ENCODE measurements at regions of chr19 and their contacts with region 1.

Region 1: GRCh38 chr19:40633207-40633606 is 32.0 kb downstream of the LTBP4 start:
- DNase-seq: no peak
- ATAC-seq: 0 out of 6 replicates have a peak, but pooled peaks of 1 of the 2 experiments have one; percentile 21
- H3K4me3 ChIP-seq: no peak overlapping the region
- H3K27ac ChIP-seq: no peak overlapping the region
- H3K4me1 ChIP-seq: peaks cover 7% of the 10 kb centered on the region
- CTCF ChIP-seq: no peak
- EP300 ChIP-seq: no peak
- POLR2A ChIP-seq: no peak
- RAD21 ChIP-seq: no peak

Region 2: DNA sequence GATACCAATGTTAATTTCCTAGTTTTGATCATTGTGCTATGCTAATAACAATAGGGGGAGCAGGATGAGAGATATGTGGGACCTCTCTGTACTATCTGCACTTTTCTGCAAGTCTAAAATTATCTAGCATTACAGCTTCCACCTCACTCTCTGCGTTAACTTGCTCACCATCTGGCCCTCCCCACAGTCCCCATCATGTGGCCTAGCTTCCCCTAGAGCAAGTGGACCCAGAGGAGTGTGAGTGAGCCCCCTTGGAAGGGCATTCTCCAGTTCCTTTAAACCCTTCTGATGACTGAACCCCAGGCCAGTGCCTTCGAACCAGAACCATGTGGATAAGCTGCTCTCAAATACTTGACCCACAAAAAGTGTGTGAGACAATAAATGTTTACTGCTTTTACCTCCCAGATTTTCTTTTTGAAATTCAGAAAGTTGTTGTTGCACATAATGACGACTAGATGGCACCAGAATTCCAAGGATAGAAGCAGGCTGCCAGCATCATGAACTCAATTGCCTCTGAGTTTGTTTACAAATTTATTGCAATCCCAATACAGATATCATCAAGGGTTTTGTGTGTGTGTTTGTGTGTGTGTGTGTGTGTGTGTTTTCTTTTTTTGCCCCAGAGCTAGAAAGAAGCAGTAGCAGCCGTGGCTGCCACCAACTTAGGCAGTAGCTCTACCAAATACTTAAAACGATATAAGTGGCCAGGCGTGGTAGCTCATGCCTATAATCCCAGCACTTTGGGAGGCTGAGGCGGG is 493.5 kb before region 1 on chr19:
- CTCF ChIA-PET with region 1: interaction called, 25 read pairs
- POLR2A ChIA-PET with region 1: no interaction called
- DNase-seq: peak; percentile 77 to 79
- ATAC-seq: peak; percentile 59 to 71
- H3K4me3 ChIP-seq: no peak overlapping the region
- H3K27ac ChIP-seq: no peak overlapping the region
- H3K4me1 ChIP-seq: no peaks in the 10 kb centered on the region
- CTCF ChIP-seq: peak; percentile 99
- EP300 ChIP-seq: no peak
- POLR2A ChIP-seq: no peak
- RAD21 ChIP-seq: peak; percentile 100

Region 3: DNA sequence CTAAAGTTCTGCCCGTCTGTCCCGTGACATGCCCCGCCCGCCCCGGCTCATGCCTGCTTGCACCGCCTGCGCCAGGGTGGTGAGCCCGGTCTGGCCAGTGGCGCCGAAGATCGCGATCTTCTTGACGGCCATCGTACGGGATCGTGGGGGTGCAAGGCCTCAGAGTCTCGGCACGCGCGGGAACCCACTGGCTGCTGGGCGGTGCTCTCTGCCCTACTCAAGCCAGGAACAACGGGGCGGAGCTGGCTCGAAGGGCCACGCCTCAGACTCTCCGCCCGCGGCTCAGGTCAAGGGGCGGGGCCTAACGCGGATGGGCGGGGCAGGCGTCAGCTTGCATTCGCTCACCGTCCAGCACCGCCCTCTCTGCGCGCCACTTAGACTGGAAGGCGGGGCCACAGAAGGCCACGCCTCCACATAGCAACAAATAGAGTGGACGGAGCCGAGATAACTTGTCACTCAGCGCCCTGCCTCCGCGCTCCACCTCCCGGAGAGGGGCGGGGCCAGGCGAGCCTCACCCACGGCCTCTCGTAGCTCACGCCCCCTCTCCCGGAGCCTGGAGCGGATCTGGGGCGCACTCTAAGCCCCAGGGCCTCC is 167.6 kb before region 1 on chr19 and contains the start of gene BLVRB:
- CTCF ChIA-PET with region 1: interaction called, 51 read pairs
- POLR2A ChIA-PET with region 1: interaction called, 5 read pairs
- DNase-seq: peak; percentile 98 to 100
- ATAC-seq: peak; percentile 73 to 88
- H3K4me3 ChIP-seq: peak within 1 kb of the TSS; percentile 62
- H3K27ac ChIP-seq: peak within 1 kb of the TSS; percentile 86 to 89
- H3K4me1 ChIP-seq: peaks cover 38% of the 10 kb centered on the region
- CTCF ChIP-seq: no peak
- EP300 ChIP-seq: no peak
- POLR2A ChIP-seq: peak; percentile 95
- RAD21 ChIP-seq: no peak
- polyA plus RNA-seq, gene BLVRB: 202 and 241 TPM in 2 replicates

Region 4: DNA sequence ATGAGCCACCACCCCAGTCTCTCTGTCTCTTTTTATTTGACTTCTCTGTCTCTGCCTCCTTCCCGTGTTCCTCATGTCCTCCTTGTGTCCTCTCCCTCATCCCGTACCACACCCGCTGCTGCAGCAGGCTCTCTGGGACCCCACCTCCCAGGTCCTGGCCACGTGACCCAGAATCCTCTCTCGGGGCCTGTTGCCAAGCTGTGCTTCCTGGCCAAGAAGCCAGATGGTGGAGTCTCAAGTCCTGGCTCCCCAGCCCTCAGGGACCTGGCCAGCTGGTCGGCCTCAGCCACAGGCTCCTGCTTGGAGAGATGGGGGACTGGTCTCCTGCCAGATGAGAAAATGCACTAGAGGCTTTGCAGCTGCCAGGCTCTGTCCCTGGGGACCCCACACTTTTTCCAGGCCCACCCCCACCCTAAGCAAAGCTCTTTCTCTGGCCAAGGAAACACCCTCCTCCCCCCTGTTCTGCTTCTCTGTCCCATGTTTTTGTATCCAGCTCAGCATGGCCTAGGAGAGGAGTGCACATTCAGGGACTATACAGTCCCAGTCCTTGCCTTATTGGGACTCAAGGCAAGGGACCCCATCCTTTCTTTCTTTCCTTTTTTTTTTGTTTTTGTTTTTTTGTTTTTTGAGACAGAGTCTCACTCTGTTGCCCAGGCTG is 90.9 kb before region 1 on chr19:
- CTCF ChIA-PET with region 1: interaction called, 109 read pairs
- POLR2A ChIA-PET with region 1: no interaction called
- DNase-seq: no peak
- ATAC-seq: no peak
- H3K4me3 ChIP-seq: no peak overlapping the region
- H3K27ac ChIP-seq: no peak overlapping the region
- H3K4me1 ChIP-seq: no peaks in the 10 kb centered on the region
- CTCF ChIP-seq: no peak
- EP300 ChIP-seq: no peak
- POLR2A ChIP-seq: no peak
- RAD21 ChIP-seq: no peak

Region 5: GRCh38 chr19:40592170-40592569 is 41.0 kb before region 1 on chr19:
- CTCF ChIA-PET with region 1: interaction called, 35 read pairs
- POLR2A ChIA-PET with region 1: no interaction called
- DNase-seq: peak; percentile 81 to 92
- ATAC-seq: peak in 1 of 2 experiments; percentile 58; a peak in 3 of 6 replicates
- H3K4me3 ChIP-seq: no peak overlapping the region
- H3K27ac ChIP-seq: no peak overlapping the region
- H3K4me1 ChIP-seq: peaks cover 36% of the 10 kb centered on the region
- CTCF ChIP-seq: no peak
- EP300 ChIP-seq: no peak
- POLR2A ChIP-seq: no peak
- RAD21 ChIP-seq: no peak

Region 6: DNA sequence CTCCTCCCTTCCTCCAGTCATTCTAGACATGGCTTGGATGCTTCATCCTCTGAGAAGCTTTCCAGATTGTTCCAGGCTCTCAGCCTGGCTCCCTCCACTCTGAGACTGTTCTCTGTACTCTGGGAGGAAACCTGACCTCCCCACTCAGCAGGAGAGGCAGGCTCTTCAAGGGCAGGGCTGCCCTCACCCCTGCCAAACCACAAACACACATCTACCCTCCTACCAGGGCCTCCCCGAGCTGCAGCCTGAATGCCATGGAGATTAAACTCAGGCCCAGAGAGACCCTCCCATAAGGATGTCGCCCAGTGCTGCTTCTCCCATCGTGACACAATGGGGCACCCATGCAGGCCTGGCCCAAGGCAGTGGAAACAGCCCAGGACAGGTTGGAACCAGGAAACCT is 41.1 kb after region 1 on chr19:
- CTCF ChIA-PET with region 1: interaction called, 10 read pairs
- POLR2A ChIA-PET with region 1: no interaction called
- DNase-seq: no peak
- ATAC-seq: no peak; a peak in 1 of 6 replicates
- H3K4me3 ChIP-seq: no peak overlapping the region
- H3K27ac ChIP-seq: no peak overlapping the region
- H3K4me1 ChIP-seq: no peaks in the 10 kb centered on the region
- CTCF ChIP-seq: no peak
- EP300 ChIP-seq: no peak
- POLR2A ChIP-seq: no peak
- RAD21 ChIP-seq: no peak